ENCODE measurements at regions of chr2 and their contacts with region 1.

Region 1: GRCh38 chr2:131673392-131674173 is 145.9 kb downstream of the CCDC74A start:
- DNase-seq: peak; percentile 73 to 81
- ATAC-seq: peak; percentile 91 to 98 (median 95)
- H3K4me3 ChIP-seq: peak overlapping the region in 9 of 10 donors; percentile 23 to 54 (median 43)
- H3K27ac ChIP-seq: no peak overlapping the region
- H3K4me1 ChIP-seq: peaks cover 0 to 34% (median 20%) of the 10 kb centered on the region in 9 donors
- H3K27me3 ChIP-seq: peaks cover 0 to 46% (median 19%) of the 10 kb centered on the region in 7 donors
- CTCF ChIP-seq: peak; percentile 68 to 94 (median 91)

Region 2: DNA sequence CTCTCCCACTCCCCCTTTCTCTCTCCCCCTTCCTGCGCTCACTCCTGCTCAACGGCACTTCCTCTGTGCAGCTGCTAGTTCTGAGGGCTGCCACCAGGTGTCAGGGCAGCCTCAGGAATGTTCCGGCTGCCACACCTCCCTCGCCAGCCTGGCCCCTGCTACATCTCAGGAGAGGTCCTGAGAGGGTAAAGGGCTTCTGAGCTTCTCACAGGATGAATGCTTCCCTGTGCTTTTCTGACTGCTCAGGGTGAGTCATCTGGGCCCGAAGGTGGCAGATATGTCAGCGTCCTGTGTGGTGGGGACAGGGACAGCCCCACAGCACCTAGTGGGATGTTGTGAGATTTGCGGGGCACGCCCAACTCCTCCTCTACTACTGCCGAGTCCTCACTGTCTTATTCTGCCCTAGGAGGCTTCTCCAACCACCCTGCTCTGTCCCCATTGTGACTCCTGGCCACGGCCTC is 519.5 kb before region 1 on chr2:
- intact Hi-C with region 1: loop called in 5 of 10 experiments (anchors 5 to 10 kb)
- DNase-seq: peak; percentile 23 to 46
- ATAC-seq: peak; percentile 78 to 92 (median 86)
- H3K4me3 ChIP-seq: no peak overlapping the region
- H3K27ac ChIP-seq: no peak overlapping the region
- H3K4me1 ChIP-seq: no peaks in the 10 kb centered on the region
- H3K27me3 ChIP-seq: no peaks in the 10 kb centered on the region
- CTCF ChIP-seq: peak; percentile 48 to 81 (median 77)

Region 3: GRCh38 chr2:131492418-131493198 is 181.0 kb before region 1 on chr2:
- intact Hi-C with region 1: loop called in 1 of 10 experiments (anchors 10 kb)
- DNase-seq: peak; percentile 91 to 92
- ATAC-seq: peak; percentile 86 to 96 (median 92)
- H3K4me3 ChIP-seq: peak overlapping the region; percentile 76 to 99 (median 90)
- H3K27ac ChIP-seq: peak overlapping the region; percentile 83 to 94 (median 90)
- H3K4me1 ChIP-seq: peaks cover 3 to 61% (median 40%) of the 10 kb centered on the region in 9 donors
- H3K27me3 ChIP-seq: no peaks in the 10 kb centered on the region
- CTCF ChIP-seq: peak; percentile 39 to 80 (median 74)

Region 4: DNA sequence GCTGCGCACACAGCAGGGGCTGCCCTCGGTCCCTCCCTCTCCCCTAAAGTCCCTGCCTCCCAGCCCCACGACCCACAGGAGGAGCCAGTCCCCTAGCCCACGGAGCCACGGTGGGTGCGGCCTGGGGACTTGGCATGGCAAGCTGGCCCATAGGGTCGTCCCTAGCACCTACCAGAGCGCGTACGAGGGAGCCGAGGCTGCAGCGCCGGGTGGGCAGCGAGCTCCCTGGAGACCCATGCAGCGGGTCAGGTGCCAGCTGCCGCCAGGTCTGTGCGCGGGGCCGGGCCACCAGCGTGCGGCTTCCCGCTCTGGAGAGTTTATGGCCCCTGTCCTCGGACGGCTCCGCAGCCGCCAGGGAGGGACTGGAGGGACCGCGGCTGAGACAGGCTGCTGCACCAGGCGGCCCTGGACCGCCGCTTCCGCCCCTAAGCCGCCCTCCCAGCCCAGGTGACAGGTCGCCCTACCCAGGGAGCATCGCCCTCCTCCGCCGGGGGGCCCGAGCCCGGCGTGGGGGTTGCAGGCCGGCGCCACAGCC is 127.7 kb after region 1 on chr2:
- intact Hi-C with region 1: loop called in 7 of 10 experiments (anchors 5 to 10 kb)
- DNase-seq: peak in 1 of 2 donors; percentile 19
- ATAC-seq: no peak
- H3K4me3 ChIP-seq: peak overlapping the region in 6 of 10 donors; percentile 33 to 50 (median 41)
- H3K27ac ChIP-seq: no peak overlapping the region
- H3K4me1 ChIP-seq: peaks cover 0 to 13% (median 4%) of the 10 kb centered on the region in 9 donors
- H3K27me3 ChIP-seq: peaks cover 0 to 18% (median 7%) of the 10 kb centered on the region in 7 donors
- CTCF ChIP-seq: no peak